Endothelial cell of umbilical vein (primary cell): ENCODE measurements at regions of chr19 and their contacts with region 1.

Region 1: DNA sequence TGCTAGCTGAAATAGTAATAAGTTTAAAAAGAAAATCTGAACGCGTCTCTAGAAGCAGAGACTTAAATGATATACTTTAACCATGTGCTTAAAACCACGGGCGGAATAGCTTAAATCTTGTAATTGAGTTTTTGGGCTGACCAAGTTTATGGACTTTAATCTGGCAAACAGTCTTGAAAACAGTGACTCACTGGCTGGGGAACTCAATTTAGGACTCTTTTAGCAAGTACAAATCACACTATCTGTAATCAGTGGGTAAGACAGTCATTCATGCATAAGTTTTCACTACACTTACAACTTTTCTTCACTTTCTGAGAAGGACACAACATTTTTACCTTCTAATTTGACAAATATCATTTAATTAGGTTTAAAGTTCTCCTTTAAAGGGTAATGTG is 26.8 kb downstream of the ZNF627 start:
- DNase-seq: no peak
- H3K4me3 ChIP-seq: no peak overlapping the region
- H3K27ac ChIP-seq: no peak overlapping the region
- H3K4me1 ChIP-seq: no peaks in the 10 kb centered on the region
- H3K27me3 ChIP-seq: peaks cover 7 to 10% of the 10 kb centered on the region in 2 experiments
- CTCF ChIP-seq: no peak
- POLR2A ChIP-seq: no peak

Region 2: DNA sequence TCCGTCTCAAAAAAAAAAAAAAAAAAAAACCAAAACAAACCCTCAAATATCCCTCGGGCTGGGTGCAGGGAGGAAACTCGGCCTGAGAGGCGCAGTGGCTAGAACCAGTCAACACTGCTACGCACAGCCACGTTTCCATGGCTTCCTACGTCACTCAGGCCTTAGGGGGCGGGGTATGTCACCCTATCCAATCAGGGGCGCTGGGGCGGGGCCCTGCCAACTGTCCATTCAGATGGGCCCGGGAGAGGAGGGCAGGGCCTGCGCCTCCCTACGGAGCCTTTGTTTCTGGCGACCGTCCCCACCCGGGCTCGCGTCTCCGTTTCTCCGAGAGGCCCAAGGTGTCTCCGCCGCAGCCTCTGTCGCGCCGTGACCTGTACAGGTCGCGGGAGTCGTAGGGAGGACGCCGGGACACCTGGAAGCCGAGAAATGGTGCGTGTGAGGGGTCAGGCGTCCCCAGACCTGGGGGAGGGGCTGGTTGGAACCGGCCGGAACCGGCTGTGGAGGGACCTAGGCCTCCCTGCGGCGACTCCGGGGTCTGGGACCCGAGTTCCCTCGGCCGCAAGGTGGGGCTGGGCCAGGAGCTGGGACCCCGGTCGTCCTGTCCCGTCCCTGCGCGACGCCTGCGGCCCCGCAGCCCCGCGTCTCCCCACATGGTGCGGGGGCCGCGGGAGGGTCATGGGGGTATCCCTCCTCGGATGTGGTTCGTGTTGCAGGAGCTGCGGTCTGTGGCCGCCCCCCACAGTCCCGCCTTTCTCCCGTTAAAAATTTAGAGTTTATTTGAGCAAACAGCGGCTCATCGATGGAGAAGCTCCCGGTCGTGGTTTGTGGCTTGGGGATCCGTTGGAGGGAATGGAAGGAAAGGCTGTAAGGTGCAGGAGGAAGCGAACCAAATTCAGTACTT is 26.6 kb before region 1 on chr19 and contains the start of gene ZNF627:
- CTCF ChIA-PET with region 1: no interaction called
- POLR2A ChIA-PET with region 1: no interaction called
- dilution Hi-C with region 1: no loop called
- intact Hi-C with region 1: loop called (anchors 2 kb)
- DNase-seq: peak; percentile 97
- H3K4me3 ChIP-seq: peak within 1 kb of the TSS; percentile 94 to 97 (median 95)
- H3K27ac ChIP-seq: peak within 1 kb of the TSS; percentile 84
- H3K4me1 ChIP-seq: peaks cover 8% of the 10 kb centered on the region
- H3K27me3 ChIP-seq: no peaks in the 10 kb centered on the region
- CTCF ChIP-seq: no peak
- POLR2A ChIP-seq: peak; percentile 95
- total RNA-seq, gene ZNF627: 9.7 and 11.2 TPM in 2 replicates

Region 3: DNA sequence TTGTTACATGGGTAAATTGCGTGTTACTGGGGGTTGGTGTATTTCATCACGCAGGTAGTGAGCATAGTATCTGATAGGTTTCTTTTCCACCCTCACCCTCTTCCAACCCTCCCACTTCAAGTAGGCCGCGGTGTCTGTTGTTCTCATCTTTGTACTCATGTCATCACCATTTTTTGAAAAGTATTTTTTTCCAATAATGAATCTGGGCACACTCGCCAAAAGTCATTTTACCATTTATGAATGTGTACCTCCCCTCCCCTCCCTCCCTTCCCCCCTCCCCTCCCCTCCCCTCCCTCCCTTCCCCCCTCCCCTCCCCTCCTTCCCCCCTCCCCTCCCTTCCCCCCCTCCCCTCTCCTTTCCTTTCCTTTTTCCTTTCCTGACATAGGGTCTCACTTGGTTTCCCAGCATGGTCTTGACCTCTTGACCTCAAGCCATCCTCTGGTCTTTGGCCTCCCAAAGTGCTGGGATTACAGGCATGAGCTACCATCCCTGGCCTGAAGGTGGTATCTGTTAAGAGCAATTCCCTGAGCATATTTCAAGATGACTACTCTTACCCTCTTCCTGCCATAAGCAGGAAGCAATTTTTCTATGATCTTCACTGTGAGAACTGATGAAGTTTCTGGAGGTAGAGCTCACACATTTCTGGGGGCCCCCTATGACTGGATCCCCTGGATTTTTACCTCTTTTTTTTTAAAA is 11.1 kb before region 1 on chr19:
- CTCF ChIA-PET with region 1: no interaction called
- POLR2A ChIA-PET with region 1: no interaction called
- dilution Hi-C with region 1: no loop called
- intact Hi-C with region 1: no loop called
- DNase-seq: no peak
- H3K4me3 ChIP-seq: no peak overlapping the region
- H3K27ac ChIP-seq: no peak overlapping the region
- H3K4me1 ChIP-seq: no peaks in the 10 kb centered on the region
- H3K27me3 ChIP-seq: no peaks in the 10 kb centered on the region
- CTCF ChIP-seq: no peak
- POLR2A ChIP-seq: no peak

Region 4: GRCh38 chr19:11639602-11640471 is 15.8 kb after region 1 on chr19:
- CTCF ChIA-PET with region 1: no interaction called
- POLR2A ChIA-PET with region 1: no interaction called
- dilution Hi-C with region 1: no loop called
- intact Hi-C with region 1: loop called (anchors 1 kb)
- DNase-seq: peak; percentile 94
- H3K4me3 ChIP-seq: peak overlapping the region; percentile 79 to 80 (median 80)
- H3K27ac ChIP-seq: peak overlapping the region; percentile 53
- H3K4me1 ChIP-seq: no peaks in the 10 kb centered on the region
- H3K27me3 ChIP-seq: no peaks in the 10 kb centered on the region
- CTCF ChIP-seq: no peak
- POLR2A ChIP-seq: no peak

Region 5: GRCh38 chr19:11673608-11674041 is 49.6 kb after region 1 on chr19:
- CTCF ChIA-PET with region 1: no interaction called
- POLR2A ChIA-PET with region 1: no interaction called
- dilution Hi-C with region 1: no loop called
- intact Hi-C with region 1: no loop called
- DNase-seq: peak; percentile 81
- H3K4me3 ChIP-seq: peak overlapping the region in 2 of 3 experiments; percentile 36 to 51
- H3K27ac ChIP-seq: no peak overlapping the region
- H3K4me1 ChIP-seq: peaks cover 6% of the 10 kb centered on the region
- H3K27me3 ChIP-seq: no peaks in the 10 kb centered on the region
- CTCF ChIP-seq: peak; percentile 79 to 86
- POLR2A ChIP-seq: no peak